ENCODE measurements at regions of chr9 and their contacts with region 1.

Region 1: DNA sequence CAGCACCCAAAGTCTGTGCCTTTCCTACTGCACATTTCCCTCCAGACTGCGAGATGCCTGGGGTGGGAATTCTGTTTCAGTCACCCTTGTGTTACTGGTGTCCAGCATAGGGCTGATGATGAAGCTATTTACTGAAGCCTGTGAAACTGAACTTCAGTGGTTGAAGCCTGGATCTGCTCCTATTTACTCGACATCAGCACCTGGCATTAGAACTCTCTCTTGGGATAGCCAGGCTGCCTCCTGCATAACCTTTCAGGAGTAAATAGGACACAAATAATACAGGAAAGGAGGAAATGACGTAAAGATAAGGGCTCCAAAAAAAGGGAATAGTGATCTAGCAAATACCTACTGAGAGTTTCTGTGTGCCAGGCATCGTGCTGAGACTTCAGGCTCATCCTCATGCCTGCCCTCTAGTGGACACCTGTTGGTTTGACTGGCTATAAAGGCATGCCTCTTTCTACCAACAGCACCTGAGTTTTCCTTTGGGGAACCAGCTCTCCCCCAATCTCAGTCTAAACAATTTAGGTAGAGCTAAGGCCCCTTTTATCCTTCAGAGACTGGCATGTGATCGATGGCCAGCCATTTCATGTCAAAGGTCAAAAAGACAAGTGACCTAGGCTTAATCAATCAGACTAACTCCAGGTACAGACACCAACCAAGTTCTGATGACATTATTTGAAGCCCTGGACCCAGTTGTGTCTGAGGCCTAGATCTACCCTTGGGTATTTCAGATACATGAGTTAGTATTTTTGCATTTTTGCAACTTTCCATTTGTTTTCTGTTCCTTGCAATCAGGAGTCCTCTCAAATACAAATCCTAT is 192.1 kb upstream of the TRIM32 start:
- DNase-seq: peak; percentile 35
- ATAC-seq: peak; percentile 83
- H3K4me3 ChIP-seq: no peak overlapping the region
- H3K27ac ChIP-seq: no peak overlapping the region
- H3K4me1 ChIP-seq: peaks cover 7 to 29% of the 10 kb centered on the region in 2 experiments; a peak in 3 of 4 replicates
- H3K27me3 ChIP-seq: no peaks in the 10 kb centered on the region
- CTCF ChIP-seq: peak; percentile 50 to 88 (median 86)
- POLR2A ChIP-seq: no peak
- RAD21 ChIP-seq: peak; percentile 64

Region 2: DNA sequence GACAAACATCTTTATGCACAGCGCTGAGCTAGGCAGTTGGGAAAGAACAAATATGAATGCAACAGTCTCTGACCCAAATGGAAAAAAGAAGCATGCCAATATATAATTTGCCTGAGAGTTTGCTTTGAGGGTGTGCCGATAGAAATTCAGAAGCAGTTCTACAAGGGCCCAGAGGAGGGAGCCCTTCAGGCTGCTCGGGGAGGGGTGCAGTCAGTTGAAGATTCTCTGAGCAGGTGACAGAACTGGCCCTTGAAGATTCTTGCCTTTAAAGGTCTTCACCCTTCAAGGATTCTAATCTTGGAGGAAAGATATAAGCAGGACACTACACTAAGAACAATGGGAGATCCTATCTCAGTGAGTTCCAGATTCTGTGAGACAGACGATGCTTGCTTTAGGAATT is 345.2 kb before region 1 on chr9:
- CTCF ChIA-PET with region 1: interaction called, 3 read pairs
- POLR2A ChIA-PET with region 1: no interaction called
- RAD21 ChIA-PET with region 1: no interaction called
- intact Hi-C with region 1: loop called (anchors 2 kb)
- DNase-seq: peak; percentile 22
- ATAC-seq: peak; percentile 77
- H3K4me3 ChIP-seq: no peak overlapping the region
- H3K27ac ChIP-seq: no peak overlapping the region
- H3K4me1 ChIP-seq: no peaks in the 10 kb centered on the region
- H3K27me3 ChIP-seq: peaks cover 11% of the 10 kb centered on the region; the same call in 1 of the 2 replicates
- CTCF ChIP-seq: peak; percentile 49 to 81 (median 75); a peak in 5 of 6 replicates
- POLR2A ChIP-seq: no peak
- RAD21 ChIP-seq: peak; percentile 51; the same call in 1 of the 2 replicates

Region 3: DNA sequence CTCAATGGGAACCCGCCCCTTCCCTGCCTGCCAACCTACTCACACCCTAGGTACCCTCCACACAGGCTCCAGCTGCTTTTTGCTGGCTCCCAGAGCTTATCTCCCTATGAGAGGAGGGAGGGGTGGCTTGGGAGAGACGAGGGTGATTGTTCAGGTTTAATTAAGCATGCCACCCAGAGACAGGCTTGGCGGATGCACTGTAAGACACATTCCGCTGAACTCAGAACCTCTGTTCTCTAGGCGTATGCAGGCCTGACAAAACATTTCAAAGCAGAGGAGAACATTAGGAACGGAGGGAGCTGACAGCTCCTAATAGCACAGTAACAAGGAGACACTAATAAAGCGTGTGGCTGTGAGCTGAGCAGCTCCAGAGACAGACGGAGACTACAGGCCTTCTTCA is 272.2 kb after region 1 on chr9:
- CTCF ChIA-PET with region 1: no interaction called
- POLR2A ChIA-PET with region 1: no interaction called
- RAD21 ChIA-PET with region 1: no interaction called
- intact Hi-C with region 1: no loop called
- DNase-seq: no peak
- ATAC-seq: no peak
- H3K4me3 ChIP-seq: no peak overlapping the region
- H3K27ac ChIP-seq: no peak overlapping the region
- H3K4me1 ChIP-seq: no peaks in the 10 kb centered on the region
- H3K27me3 ChIP-seq: peaks cover 24% of the 10 kb centered on the region
- CTCF ChIP-seq: no peak
- POLR2A ChIP-seq: no peak
- RAD21 ChIP-seq: no peak

Measured in HCT116 (cell line).